ENCODE measurements at regions of chr4 and their contacts with region 1.

Region 1: GRCh38 chr4:82968972-82969371 is 41.7 kb downstream of the LIN54 start:
- DNase-seq: no peak
- H3K4me3 ChIP-seq: no peak overlapping the region
- H3K27ac ChIP-seq: no peak overlapping the region
- H3K4me1 ChIP-seq: no peaks in the 10 kb centered on the region
- H3K27me3 ChIP-seq: no peaks in the 10 kb centered on the region
- CTCF ChIP-seq: no peak

Region 2: DNA sequence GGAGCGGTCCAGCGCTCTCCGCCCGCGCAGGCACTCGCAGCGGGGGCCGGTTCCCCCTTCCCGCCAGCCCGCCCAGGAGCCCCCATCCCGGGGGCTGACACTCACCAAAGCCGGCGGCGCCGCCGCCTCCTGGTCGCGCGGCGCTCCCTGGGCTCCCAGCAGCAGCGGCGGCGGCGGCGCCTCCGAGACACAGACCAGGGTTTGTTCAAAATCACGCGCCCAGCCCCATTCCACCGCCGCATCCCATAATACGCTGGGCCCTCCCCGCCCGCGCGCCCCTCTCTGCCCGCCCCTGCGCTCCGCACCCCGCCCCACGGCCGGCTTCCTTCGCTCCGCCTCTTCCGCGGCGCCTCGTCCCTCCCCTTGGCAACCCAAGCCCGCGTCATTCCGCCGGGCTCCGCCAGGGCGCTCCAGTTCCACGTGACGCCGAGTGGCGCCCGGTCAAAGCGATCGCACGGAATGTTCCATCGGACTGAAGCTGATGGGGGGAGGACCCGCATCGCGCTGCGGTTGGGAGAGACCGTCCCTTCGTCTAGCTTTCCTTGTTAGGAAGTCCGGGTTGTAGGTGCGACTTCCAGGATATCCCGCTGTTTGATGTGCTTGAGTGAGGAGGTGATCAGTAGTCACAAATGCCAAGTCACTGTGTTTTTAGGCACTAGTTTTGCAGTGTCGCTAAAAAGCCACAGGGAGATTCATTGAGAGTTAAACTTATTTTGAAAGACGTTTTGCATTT is 43.9 kb after region 1 on chr4:
- CTCF ChIA-PET with region 1: interaction called, 17 read pairs
- POLR2A ChIA-PET with region 1: interaction called, 9 read pairs
- intact Hi-C with region 1: no loop called
- DNase-seq: peak; percentile 90 to 94
- H3K4me3 ChIP-seq: peak overlapping the region; percentile 83
- H3K27ac ChIP-seq: peak overlapping the region; percentile 81
- H3K4me1 ChIP-seq: peaks cover 32% of the 10 kb centered on the region
- H3K27me3 ChIP-seq: no peaks in the 10 kb centered on the region
- CTCF ChIP-seq: no peak

Measured in PC-9 (cell line).